Head of caudate nucleus (tissue), 42 donors: ENCODE measurements at regions of chr10 and their contacts with region 1.

Region 1: DNA sequence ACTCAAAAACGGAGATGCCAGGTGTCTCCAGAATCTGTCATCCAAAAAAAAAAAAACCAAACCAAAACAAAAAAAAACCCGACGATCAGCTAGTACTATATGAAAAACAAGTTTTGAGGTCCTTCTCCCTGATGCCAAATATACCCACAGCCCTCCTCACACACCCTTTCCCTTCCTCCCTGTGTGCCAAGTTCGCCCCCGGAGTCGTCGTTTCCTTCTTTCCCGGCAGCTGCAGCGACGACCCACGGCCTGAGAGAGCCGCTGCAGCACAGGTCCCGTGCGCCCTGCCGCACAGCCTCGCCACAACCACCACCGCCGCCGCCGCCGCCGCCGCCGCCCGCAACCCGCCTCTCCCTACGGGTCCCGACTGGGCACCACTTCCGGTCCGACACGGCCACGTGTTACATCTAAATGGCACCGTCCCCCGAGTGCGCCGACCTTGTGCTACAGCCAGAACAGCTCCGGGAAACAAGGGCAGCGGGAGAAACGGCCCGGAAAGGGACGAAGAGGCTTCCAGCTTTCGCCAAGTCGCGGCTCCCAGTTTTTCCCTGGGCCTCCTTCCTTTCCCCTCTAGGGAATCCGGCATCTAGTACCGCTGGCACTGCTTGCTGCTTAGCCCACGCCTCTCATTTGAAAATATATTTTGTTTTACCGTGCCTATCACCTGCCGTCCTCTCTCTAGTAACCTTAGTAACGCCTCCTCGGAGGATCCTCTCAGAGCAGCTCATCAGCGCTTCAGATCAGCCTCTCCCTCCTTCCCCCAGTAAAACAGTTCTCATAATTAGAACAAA is at the start of gene FRA10AC1:
- DNase-seq: peak; percentile 81 to 97 (median 92)

Region 2: DNA sequence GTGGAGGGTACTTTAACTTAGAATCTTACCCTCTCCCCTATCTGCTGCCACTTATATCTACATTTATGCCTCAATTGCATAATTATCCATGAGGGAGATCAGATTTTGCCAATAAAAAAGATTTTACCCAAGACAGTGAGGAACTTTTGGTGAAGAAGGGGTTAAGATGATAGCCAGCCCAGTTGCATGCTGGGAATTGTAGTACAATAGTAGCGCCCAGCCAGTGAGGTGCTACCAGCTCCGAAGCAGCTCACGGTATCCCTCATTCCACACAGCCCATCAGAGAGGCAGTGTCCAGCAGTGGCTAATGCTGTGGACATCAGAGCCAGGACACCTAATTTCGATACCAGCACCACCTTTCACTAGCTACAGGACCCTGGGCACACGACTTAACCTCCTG is 49.4 kb after region 1 on chr10:
- intact Hi-C with region 1: loop called (anchors 10 kb)
- DNase-seq: peak in 30 of 42 donors; percentile 19 to 77 (median 54)

Region 3: DNA sequence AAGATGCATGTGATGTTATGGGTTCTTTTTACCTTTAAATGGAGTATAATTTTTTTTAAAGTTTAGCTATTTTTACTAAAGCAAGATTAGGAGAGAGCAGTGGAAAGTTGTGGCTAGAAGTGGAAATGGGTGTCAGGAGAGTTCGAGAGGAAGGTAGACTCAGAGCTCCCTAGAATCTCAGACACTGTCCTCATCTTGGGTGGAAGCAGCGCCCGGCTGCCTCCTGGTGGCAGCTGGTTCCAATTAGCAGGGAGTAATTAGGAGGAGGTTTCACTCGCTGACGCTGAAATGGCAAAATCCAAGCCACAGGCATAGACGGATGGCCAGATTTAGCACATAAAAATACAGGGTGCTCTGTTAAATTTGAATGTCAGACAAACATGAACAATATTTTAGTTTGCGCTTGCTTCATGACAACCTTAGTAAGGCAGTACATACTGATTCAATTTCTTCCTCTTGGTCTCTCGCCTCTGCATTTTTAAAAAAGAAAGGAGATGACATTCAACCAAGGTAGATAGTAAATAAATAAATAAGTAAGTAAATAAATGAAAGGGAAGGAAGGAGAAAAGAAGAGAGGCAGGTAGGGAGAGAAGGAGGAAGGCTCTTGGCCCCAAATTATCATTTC is 113.8 kb after region 1 on chr10:
- intact Hi-C with region 1: loop called (anchors 5 kb)
- DNase-seq: peak; percentile 38 to 88 (median 75)

Region 4: GRCh38 chr10:93968540-93968945 is 266.1 kb after region 1 on chr10:
- intact Hi-C with region 1: no loop called
- DNase-seq: no peak